Mucosa of descending colon (tissue), 3 donors: ENCODE measurements at regions of chr2 and their contacts with region 1.

Region 1: GRCh38 chr2:219452838-219453317 is 18.2 kb downstream of the SPEG start:
- DNase-seq: no peak
- ATAC-seq: peak; percentile 11
- H3K4me3 ChIP-seq: no peak overlapping the region
- H3K4me1 ChIP-seq: peaks cover 1% of the 10 kb centered on the region
- CTCF ChIP-seq: no peak

Region 2: GRCh38 chr2:219087361-219087760 is 365.5 kb before region 1 on chr2:
- intact Hi-C with region 1: no loop called
- DNase-seq: no peak
- ATAC-seq: no peak
- H3K4me3 ChIP-seq: no peak overlapping the region
- H3K4me1 ChIP-seq: no peaks in the 10 kb centered on the region
- CTCF ChIP-seq: no peak

Region 3: DNA sequence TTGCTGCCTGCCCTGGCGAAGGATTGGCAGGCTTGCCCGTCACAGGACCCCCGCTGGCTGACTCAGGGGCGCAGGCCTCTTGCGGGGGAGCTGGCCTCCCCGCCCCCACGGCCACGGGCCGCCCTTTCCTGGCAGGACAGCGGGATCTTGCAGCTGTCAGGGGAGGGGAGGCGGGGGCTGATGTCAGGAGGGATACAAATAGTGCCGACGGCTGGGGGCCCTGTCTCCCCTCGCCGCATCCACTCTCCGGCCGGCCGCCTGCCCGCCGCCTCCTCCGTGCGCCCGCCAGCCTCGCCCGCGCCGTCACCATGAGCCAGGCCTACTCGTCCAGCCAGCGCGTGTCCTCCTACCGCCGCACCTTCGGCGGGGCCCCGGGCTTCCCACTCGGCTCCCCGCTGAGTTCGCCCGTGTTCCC is 34.7 kb before region 1 on chr2 and contains the start of gene DES:
- intact Hi-C with region 1: loop called in 1 of 2 experiments (anchors 5 kb)
- DNase-seq: no peak
- ATAC-seq: peak; percentile 49
- H3K4me3 ChIP-seq: no peak within 1 kb of the TSS
- H3K4me1 ChIP-seq: peaks cover 10% of the 10 kb centered on the region
- CTCF ChIP-seq: no peak
- total RNA-seq, gene DES: 65.4 to 4,715 (median 359) TPM